ENCODE measurements at regions of chr14 and their contacts with region 1.

Region 1: DNA sequence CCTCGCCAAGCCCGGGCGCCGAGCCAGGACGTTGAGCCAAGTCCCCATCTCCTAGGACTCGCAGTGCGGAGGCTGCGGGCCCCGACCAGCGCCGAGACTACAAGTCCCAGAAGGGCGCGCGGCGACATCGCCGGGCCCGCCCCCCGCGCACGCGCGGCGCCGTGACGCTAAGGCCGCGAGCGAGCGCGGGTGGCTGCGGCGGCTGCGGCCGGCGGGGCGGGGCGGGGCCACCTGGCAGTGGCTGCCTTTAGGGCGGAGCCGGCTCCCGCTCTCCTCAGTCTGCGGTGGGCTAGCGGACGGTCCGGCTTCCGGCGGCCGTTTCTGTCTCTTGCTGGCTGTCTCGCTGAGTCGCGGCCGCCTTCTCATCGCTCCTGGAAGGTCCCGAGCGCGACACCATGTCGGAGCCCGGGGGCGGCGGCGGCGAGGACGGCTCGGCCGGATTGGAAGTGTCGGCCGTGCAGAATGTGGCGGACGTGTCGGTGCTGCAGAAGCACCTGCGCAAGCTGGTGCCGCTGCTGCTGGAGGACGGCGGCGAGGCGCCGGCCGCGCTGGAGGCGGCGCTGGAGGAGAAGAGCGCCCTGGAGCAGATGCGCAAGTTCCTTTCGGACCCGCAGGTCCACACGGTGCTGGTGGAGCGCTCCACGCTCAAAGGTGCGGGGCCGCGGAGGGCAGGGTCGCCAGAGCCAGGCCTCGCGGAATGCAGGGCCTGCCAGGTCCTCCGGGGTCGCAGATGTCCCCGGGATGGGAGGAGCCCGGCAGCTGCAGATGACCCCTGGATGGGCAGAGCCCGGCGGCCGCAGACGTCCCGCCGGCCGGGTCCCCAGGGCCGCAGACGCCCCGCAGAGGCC is at the start of gene DYNC1H1:
- DNase-seq: peak; percentile 88
- H3K4me3 Mint-ChIP-seq: peak within 1 kb of the TSS; percentile 92
- H3K27ac Mint-ChIP-seq: peak within 1 kb of the TSS; percentile 90
- H3K4me1 Mint-ChIP-seq: peaks cover 30% of the 10 kb centered on the region
- H3K27me3 Mint-ChIP-seq: no peaks in the 10 kb centered on the region
- total RNA-seq, gene DYNC1H1: 286 and 287 TPM in 2 replicates

Region 2: DNA sequence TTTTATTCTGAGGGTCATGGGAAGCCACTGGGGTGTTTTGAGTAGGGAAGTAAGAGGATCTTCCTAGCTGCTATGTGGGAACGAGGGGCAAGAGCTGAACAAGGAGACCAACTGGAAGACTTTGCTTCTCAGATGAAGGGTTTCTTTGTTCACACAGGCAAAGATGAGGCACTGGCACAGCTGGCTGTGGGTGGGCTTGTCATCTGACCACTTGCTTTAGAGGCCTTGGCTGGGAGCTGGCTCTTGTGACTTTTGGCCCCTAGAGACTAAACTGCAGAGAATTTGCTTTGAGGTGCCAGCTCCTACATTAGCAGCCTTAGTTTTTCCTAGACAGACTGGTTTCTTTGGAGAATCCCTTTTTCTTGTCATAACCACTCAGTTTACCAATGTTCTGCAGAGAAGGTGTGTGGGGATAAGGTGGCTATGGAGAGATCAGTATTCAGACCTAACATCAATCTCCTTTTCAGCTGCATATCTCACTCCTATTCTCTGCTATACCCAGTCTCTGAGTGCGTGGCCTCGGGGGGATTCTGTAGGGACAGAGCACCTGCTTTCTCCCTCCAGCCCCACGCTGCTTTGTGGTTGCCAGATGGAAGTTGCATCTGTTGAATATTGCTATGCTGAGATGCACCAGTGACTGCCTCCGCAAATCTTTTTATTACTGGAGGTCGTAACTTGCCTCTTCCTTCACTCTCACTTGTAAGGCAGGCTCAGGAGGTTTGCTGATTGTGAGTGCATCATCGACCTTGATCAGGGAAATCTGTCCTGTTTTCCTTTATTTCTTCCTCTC is 190.3 kb before region 1 on chr14:
- intact Hi-C with region 1: loop called (anchors 5 kb)
- DNase-seq: no peak
- H3K4me3 Mint-ChIP-seq: no peak overlapping the region
- H3K27ac Mint-ChIP-seq: no peak overlapping the region
- H3K4me1 Mint-ChIP-seq: peaks cover 12% of the 10 kb centered on the region
- H3K27me3 Mint-ChIP-seq: peaks cover 2% of the 10 kb centered on the region

Region 3: GRCh38 chr14:102020058-102020971 is 55.8 kb after region 1 on chr14:
- intact Hi-C with region 1: loop called (anchors 2 kb)
- DNase-seq: peak; percentile 50
- H3K4me3 Mint-ChIP-seq: peak overlapping the region; percentile 3
- H3K27ac Mint-ChIP-seq: peak overlapping the region; percentile 86
- H3K4me1 Mint-ChIP-seq: peaks cover 19% of the 10 kb centered on the region
- H3K27me3 Mint-ChIP-seq: no peaks in the 10 kb centered on the region

Region 4: DNA sequence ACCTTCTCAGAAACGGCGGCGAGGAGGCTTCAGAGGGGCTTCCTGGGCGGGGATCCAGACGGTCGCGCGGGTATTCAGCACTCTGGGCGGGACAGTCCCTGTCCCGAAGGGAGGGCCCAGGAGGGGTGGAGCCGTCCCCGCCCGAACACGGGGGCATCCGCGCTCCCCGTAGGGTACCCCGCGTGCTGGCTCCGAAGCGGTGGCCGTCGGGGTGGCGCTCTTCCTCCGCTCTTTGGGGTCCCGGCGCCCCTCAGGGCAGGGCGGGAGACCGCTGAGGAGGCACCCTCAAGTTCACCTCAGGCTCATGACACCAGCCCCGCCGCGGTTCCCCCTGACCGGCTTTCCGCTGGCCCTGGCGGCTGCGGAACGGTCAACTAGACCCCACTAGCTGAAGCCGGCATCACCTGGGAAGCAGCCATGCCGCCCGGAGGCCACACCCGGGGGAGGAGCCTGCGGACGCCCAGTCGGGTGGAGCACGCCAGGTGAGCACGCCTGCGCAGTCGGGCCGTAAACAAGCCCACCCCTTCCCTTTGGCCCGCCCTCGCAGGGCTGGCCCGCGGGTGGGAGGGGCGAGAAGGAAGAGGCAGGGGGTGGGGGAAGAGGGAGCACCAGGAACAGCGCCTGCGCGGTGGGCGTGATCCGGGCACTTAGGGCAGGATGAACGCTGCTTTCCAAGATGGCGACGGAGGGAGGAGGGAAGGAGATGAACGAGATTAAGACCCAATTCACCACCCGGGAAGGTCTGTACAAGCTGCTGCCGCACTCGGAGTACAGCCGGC is 174.9 kb after region 1 on chr14 and contains the start of gene WDR20:
- intact Hi-C with region 1: loop called (anchors 5 kb)
- DNase-seq: peak; percentile 98
- H3K4me3 Mint-ChIP-seq: peak within 1 kb of the TSS; percentile 94
- H3K27ac Mint-ChIP-seq: peak within 1 kb of the TSS; percentile 94
- H3K4me1 Mint-ChIP-seq: peaks cover 17% of the 10 kb centered on the region
- H3K27me3 Mint-ChIP-seq: no peaks in the 10 kb centered on the region
- total RNA-seq, gene WDR20: 35.3 and 37.0 TPM in 2 replicates

Region 5: DNA sequence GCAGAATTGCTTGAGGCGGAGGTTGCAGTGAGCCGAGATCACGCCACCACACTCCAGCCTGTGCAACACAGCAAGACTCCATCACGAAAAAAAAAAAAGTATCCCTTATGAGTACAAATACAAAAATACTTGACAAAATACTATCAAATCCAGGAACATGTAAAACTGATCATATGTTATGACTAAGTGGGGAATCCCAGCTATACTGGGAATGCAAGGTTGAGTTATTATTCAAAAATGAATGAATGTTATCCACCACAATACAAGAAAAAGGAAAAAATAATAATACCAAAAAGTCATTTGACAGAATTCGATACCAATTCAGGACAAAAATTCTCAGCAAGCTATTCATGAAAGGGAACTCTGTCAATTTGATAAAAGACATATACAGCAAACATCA is 307.9 kb after region 1 on chr14:
- intact Hi-C with region 1: no loop called
- DNase-seq: no peak
- H3K4me3 Mint-ChIP-seq: no peak overlapping the region
- H3K27ac Mint-ChIP-seq: no peak overlapping the region
- H3K4me1 Mint-ChIP-seq: no peaks in the 10 kb centered on the region
- H3K27me3 Mint-ChIP-seq: peaks cover 3% of the 10 kb centered on the region